ENCODE measurements at regions of chr17 and their contacts with region 1.

Region 1: GRCh38 chr17:34980681-34981537 is 597 bp downstream of the LIG3 start:
- DNase-seq: peak; percentile 92

Region 2: DNA sequence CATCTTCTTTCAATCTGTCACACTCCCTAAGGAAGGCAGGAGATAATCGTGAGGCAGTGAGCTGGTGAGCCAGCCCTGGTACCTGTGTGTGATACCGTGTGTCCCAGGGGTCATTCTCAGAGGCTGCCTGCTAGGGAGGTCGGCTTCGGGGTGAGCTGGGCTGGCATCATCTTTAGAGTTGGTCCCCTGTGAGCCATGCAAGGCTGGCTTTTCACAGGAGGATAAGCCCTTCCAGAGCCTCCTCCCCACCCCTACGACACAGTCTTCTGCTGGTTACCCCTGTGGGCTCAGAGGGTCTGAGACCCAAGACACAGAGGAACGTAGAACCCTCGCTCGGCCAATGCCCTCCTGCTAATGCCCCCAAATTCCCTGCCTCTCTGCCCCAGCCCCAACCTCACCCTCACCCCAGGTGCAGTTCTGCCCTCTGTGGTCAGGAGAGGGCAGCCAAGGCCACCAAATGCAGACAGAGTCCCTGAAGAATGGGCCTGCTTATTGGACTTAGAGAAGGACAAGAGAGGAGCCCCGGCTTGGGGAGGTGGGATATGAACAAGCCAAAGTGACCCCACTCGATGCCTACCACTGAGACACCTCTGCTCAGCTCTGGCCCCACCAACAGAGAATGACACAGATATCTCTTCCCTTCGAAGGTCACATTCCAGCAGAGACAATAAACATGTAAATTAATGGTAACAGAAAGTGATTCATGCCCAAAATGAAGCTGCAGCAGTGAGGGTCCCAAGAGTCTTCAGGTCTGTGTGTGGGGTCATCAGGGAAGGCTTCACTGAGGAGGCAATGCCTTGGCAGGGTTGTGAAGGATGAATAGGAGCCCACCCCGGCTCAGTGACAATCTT is 537.1 kb before region 1 on chr17:
- intact Hi-C with region 1: loop called (anchors 5 kb)
- DNase-seq: no peak

Region 3: GRCh38 chr17:34961093-34961911 is 19.6 kb before region 1 on chr17 and contains the starts of genes CCT6B and ZNF830:
- intact Hi-C with region 1: loop called (anchors 1 kb)
- DNase-seq: peak; percentile 97
- total RNA-seq, gene CCT6B: 2.2 TPM
- total RNA-seq, gene ZNF830: 8.7 TPM